Endothelial cell of umbilical vein (primary cell): ENCODE measurements at regions of chr11 and their contacts with region 1.

Region 1: GRCh38 chr11:125345421-125346178 is 150.5 kb downstream of the FEZ1 start:
- DNase-seq: peak; percentile 67
- H3K4me3 ChIP-seq: no peak overlapping the region
- H3K27ac ChIP-seq: no peak overlapping the region
- H3K4me1 ChIP-seq: no peaks in the 10 kb centered on the region
- H3K27me3 ChIP-seq: no peaks in the 10 kb centered on the region
- CTCF ChIP-seq: peak; percentile 84 to 90
- POLR2A ChIP-seq: no peak

Region 2: GRCh38 chr11:125117429-125117828 is 228.2 kb before region 1 on chr11:
- CTCF ChIA-PET with region 1: interaction called, 15 read pairs
- POLR2A ChIA-PET with region 1: no interaction called
- dilution Hi-C with region 1: no loop called
- intact Hi-C with region 1: no loop called
- DNase-seq: peak; percentile 3
- H3K4me3 ChIP-seq: no peak overlapping the region
- H3K27ac ChIP-seq: no peak overlapping the region
- H3K4me1 ChIP-seq: no peaks in the 10 kb centered on the region
- H3K27me3 ChIP-seq: peaks cover 5 to 8% of the 10 kb centered on the region in 2 experiments
- CTCF ChIP-seq: no peak
- POLR2A ChIP-seq: no peak

Region 3: DNA sequence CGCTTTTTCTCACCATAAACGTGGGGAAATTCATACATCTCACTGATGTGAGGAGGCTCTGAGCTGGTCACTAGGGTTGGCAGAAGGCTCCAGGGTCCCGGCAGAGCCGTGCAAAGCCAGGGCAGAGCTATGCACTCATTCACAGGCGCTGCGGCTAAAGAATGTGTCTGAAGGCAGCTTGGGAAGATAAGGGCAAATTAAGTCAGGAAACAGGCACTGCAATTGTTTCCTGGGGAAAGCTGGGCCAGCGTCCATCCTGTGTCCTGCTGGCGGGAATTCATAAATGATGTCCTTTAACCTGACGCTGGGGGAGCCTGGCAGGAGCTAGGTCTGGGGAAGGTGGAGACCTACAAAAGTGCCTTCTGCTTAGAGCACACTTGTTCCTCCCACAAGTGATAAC is 153.4 kb before region 1 on chr11:
- CTCF ChIA-PET with region 1: interaction called, 20 read pairs
- POLR2A ChIA-PET with region 1: no interaction called
- dilution Hi-C with region 1: no loop called
- intact Hi-C with region 1: no loop called
- DNase-seq: peak; percentile 87
- H3K4me3 ChIP-seq: no peak overlapping the region
- H3K27ac ChIP-seq: no peak overlapping the region
- H3K4me1 ChIP-seq: peaks cover 8% of the 10 kb centered on the region
- H3K27me3 ChIP-seq: peaks cover 4 to 8% of the 10 kb centered on the region in 2 experiments
- CTCF ChIP-seq: peak in 1 of 2 donors; percentile 32
- POLR2A ChIP-seq: peak; percentile 40

Region 4: GRCh38 chr11:125263268-125263790 is 82.3 kb before region 1 on chr11:
- CTCF ChIA-PET with region 1: interaction called, 28 read pairs
- POLR2A ChIA-PET with region 1: no interaction called
- dilution Hi-C with region 1: no loop called
- intact Hi-C with region 1: loop called (anchors 5 kb)
- DNase-seq: peak; percentile 53
- H3K4me3 ChIP-seq: no peak overlapping the region
- H3K27ac ChIP-seq: no peak overlapping the region
- H3K4me1 ChIP-seq: no peaks in the 10 kb centered on the region
- H3K27me3 ChIP-seq: peaks cover 13 to 29% of the 10 kb centered on the region in 2 experiments
- CTCF ChIP-seq: no peak
- POLR2A ChIP-seq: no peak

Region 5: GRCh38 chr11:125315077-125315740 is 30.4 kb before region 1 on chr11:
- CTCF ChIA-PET with region 1: interaction called, 15 read pairs
- POLR2A ChIA-PET with region 1: no interaction called
- dilution Hi-C with region 1: no loop called
- intact Hi-C with region 1: loop called (anchors 2 kb)
- DNase-seq: peak; percentile 45
- H3K4me3 ChIP-seq: no peak overlapping the region
- H3K27ac ChIP-seq: no peak overlapping the region
- H3K4me1 ChIP-seq: peaks cover 11% of the 10 kb centered on the region
- H3K27me3 ChIP-seq: peaks cover 3 to 6% of the 10 kb centered on the region in 2 experiments
- CTCF ChIP-seq: no peak
- POLR2A ChIP-seq: no peak

Region 6: GRCh38 chr11:125390946-125391345 is 45.3 kb after region 1 on chr11:
- CTCF ChIA-PET with region 1: interaction called, 13 read pairs
- POLR2A ChIA-PET with region 1: no interaction called
- dilution Hi-C with region 1: no loop called
- intact Hi-C with region 1: no loop called
- DNase-seq: peak; percentile 79
- H3K4me3 ChIP-seq: peak overlapping the region in 1 of 3 experiments; percentile 23
- H3K27ac ChIP-seq: peak overlapping the region; percentile 73
- H3K4me1 ChIP-seq: peaks cover 18% of the 10 kb centered on the region
- H3K27me3 ChIP-seq: peaks cover 0 to 2% of the 10 kb centered on the region in 2 experiments
- CTCF ChIP-seq: no peak
- POLR2A ChIP-seq: no peak

Region 7: GRCh38 chr11:125519860-125520834 is 174.5 kb after region 1 on chr11:
- CTCF ChIA-PET with region 1: no interaction called
- POLR2A ChIA-PET with region 1: no interaction called
- dilution Hi-C with region 1: no loop called
- intact Hi-C with region 1: no loop called
- DNase-seq: no peak
- H3K4me3 ChIP-seq: no peak overlapping the region
- H3K27ac ChIP-seq: no peak overlapping the region
- H3K4me1 ChIP-seq: no peaks in the 10 kb centered on the region
- H3K27me3 ChIP-seq: no peaks in the 10 kb centered on the region
- CTCF ChIP-seq: no peak
- POLR2A ChIP-seq: no peak

Region 8: GRCh38 chr11:125553357-125553756 is 207.8 kb after region 1 on chr11:
- CTCF ChIA-PET with region 1: no interaction called
- POLR2A ChIA-PET with region 1: no interaction called
- dilution Hi-C with region 1: no loop called
- intact Hi-C with region 1: no loop called
- DNase-seq: no peak
- H3K4me3 ChIP-seq: no peak overlapping the region
- H3K27ac ChIP-seq: no peak overlapping the region
- H3K4me1 ChIP-seq: no peaks in the 10 kb centered on the region
- H3K27me3 ChIP-seq: no peaks in the 10 kb centered on the region
- CTCF ChIP-seq: no peak
- POLR2A ChIP-seq: no peak